ENCODE measurements at regions of chr11 and their contacts with region 1.

Region 1: DNA sequence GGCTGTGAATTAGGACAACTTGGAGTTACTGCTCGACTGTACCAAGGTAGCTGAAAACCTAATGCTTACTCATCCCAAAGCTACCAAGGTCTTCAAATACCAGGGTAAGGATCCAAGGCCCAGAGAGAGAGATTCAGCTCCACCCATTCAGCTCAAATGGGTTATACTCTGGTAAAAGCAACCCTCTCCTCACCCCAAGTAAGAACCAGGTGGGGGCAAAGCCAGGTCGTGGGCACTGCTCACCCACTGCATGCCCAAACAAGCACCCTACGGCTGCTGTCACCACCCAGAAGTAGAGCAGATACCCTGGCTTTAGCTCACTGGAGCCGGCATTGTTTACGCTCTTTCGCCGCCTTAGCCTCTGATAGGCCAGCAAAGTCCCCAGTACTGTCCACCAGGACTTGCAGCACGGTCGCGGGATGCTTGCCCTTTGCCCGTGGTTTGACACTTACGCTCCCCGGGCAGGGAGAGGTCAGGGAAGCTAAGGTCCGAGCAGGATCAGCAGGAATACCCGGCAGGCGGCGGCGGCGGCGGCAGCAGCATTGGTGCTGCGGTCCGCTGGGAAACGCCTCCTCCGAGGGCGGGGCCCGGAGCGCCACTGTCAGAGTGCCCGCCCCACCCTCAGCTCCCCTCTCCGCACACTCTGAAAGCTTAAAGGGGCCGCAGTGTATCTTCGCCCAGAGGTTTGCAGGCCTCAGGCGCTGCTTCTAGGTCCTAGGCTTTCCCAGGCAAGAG is 19.6 kb downstream of the CKAP5 start:
- DNase-seq: peak; percentile 94
- ATAC-seq: peak; percentile 99

Region 2: GRCh38 chr11:46845740-46846509 is 19.4 kb after region 1 on chr11 and contains the start of gene CKAP5:
- intact Hi-C with region 1: loop called (anchors 2 kb)
- DNase-seq: peak; percentile 94
- ATAC-seq: peak; percentile 99
- total RNA-seq, gene CKAP5: 70.3 TPM

Measured in Right ventricle myocardium inferior (tissue), 1 donor.